HAP-1 (cell line): ENCODE measurements at regions of chr2 and their contacts with region 1.

Region 1: DNA sequence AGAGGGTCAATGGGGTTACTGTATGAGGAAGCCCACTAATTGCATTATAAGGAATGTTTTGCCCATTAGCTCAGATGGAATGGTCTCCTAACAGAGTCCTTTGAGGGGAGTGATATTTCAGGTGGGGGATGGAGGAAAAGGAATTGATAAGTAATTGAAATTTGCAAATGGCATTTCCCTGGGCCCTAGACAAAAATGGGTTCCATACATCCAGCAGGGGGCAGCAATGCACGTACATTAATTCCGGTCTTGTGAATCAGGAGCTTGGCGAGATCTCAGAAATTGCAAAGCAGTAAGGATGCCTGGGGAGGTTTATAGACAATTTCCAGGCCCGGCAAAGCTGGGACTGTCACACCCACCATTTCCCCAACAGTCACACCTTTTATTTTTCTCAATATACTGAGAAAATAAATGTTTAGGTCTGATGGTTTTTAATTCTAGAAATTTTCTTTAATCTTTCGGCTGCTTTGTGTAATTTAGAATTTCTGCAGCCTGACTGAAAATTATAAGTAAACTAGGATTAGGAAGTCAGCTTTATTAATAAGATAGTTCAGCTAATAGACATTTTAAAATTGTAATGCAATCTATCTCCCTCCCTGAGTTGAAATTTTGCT is 122.8 kb downstream of the LYPD1 start:
- DNase-seq: peak; percentile 6 to 73
- H3K4me3 ChIP-seq: no peak overlapping the region
- H3K4me1 ChIP-seq: no peaks in the 10 kb centered on the region
- H3K27me3 ChIP-seq: no peaks in the 10 kb centered on the region

Region 2: GRCh38 chr2:132849118-132849517 is 301.9 kb after region 1 on chr2:
- in situ Hi-C with region 1: no loop called
- DNase-seq: no peak
- H3K4me3 ChIP-seq: no peak overlapping the region
- H3K4me1 ChIP-seq: no peaks in the 10 kb centered on the region
- H3K27me3 ChIP-seq: no peaks in the 10 kb centered on the region

Region 3: DNA sequence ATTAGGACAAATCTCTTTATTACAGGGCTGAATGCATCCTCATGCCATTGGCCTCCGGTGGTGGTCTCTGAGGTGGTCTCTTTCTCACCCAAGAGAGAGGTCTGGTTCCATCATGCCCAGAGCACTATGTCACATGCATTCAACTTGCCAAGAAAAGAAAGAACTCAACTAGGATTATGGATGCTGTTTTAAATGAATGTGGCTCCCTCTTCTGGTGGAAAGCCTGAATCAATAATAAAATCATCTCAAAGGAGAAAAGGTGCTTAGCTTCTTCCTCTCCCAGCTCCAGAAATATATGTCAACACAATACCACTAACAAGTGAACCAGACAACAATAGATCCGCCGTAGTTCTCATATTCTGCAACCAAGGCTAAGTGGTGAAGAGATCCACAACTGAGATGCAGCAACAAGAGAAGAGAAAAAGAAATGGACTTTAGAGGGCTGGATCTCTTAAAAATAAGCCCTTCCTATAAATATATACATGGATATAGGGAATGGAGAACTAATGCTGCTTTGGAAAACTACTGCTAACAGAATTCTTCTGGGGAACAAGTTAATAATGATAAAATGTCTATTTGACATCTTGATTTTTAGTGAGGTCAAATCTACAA is 624.3 kb after region 1 on chr2:
- in situ Hi-C with region 1: loop called (anchors 10 kb)
- DNase-seq: peak; percentile 23 to 77
- H3K4me3 ChIP-seq: no peak overlapping the region
- H3K4me1 ChIP-seq: no peaks in the 10 kb centered on the region
- H3K27me3 ChIP-seq: peaks cover 6% of the 10 kb centered on the region; the same call in 1 of the 2 replicates